GM10248 (cell line): ENCODE measurements at regions of chr5 and their contacts with region 1.

Region 1: DNA sequence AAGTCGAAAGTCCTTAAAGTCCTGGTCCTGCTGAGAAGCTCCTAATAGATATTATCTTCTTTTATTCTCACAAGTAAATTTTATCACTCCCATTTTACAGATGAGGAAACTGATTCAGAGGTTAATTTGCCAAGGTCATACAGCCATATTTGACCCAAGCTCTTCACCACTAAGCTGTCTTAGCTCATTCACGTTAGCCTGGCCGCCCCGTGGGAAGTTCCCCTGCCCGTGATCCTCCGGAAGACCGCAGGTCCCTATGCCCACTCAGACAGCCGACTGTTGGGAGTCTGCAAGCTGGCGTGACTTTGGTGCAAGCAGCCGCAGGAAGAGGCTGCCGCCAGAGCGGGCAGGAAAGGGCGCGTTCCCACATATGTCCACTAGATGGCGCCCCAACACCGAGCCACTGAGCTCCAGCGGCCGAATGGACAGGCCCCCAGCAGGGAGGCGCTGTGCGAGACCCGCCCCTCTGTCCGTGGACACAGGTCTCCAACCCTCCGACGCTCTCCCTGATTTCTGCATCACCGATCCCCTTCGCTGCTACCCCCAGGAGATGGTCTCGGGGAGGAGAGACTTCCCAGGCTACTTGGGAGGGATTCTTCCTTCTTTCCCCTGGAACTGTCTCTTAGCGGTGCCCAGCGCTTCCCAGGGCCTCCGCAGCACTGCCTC is 10.0 kb upstream of the ARAP3 start:
- DNase-seq: peak; percentile 88
- CTCF ChIP-seq: peak; percentile 98

Region 2: GRCh38 chr5:141547488-141547887 is 144.5 kb before region 1 on chr5:
- CTCF ChIA-PET with region 1: no interaction called
- POLR2A ChIA-PET with region 1: no interaction called
- DNase-seq: no peak
- CTCF ChIP-seq: no peak

Region 3: GRCh38 chr5:141570655-141571054 is 121.3 kb before region 1 on chr5:
- CTCF ChIA-PET with region 1: no interaction called
- POLR2A ChIA-PET with region 1: no interaction called
- DNase-seq: no peak
- CTCF ChIP-seq: no peak

Region 4: DNA sequence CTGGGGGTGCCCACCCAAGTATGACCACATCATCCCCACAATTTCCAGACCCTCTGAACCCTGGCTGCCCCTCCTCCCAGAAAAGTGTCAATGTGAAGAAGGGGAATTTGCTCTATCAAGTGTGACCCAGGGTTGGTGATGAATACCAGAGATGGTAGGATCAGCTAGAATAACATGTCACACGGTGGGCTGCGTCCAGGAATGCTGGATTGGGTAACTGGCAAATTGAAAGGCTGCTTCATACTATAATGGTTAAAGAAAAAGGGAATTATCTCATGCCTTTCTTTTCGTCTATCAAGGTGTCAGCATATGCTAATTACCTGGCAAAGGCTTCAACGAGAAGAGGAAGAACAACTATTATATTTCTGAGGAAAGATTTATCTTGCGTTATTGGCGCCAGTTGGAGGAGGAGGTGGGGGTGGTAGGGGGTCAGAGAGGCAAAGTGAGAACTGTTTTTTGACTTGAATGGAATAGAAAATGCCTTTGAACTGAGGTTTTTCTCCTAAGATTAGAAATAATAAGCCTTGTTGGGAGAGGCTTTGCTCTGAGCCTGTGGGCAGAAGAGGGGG is 17.8 kb after region 1 on chr5:
- CTCF ChIA-PET with region 1: interaction called, 73 read pairs
- POLR2A ChIA-PET with region 1: no interaction called
- DNase-seq: no peak
- CTCF ChIP-seq: no peak

Region 5: DNA sequence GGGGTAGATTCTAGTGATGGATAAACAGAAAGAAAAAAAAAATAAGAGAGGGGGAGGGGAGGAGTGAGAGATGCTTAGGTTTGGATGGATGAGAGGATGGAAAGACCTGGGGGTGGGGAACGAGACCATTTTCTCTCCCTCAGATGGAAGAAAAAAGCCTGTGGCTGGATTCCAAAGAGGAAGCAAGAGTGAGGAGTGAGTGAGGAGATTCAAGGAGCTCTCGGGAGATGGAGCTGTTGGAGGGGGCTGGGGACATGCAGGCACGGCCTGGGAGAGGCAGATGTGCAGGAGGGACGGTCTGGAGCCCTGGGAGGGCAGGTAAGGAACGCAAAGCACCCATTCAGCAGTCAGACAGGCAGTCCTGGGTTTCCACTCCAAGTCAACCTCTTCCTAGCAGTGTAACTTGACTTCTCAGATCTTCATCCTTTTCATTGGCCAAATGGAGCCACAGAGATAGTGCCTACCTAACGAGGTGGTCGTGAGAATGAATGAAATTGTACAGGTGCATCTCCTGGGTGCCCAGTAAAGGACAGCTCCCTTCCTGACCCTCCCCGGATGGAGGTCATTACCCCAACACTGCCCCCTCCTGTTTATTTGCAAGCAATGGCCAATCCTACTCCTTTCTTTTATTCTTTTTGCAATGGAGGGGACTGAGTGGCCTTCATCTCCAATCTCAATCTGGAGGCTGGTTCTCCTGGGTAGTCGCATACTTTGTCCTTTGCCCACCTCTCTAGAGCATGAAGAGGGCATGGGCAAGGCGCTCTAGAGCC is 134.0 kb after region 1 on chr5:
- CTCF ChIA-PET with region 1: interaction called, 35 read pairs
- POLR2A ChIA-PET with region 1: no interaction called
- DNase-seq: peak; percentile 60
- CTCF ChIP-seq: peak; percentile 29

Region 6: GRCh38 chr5:141914199-141914743 is 222.3 kb after region 1 on chr5:
- CTCF ChIA-PET with region 1: interaction called, 12 read pairs
- POLR2A ChIA-PET with region 1: no interaction called
- DNase-seq: peak; percentile 66
- CTCF ChIP-seq: peak; percentile 29

Region 7: DNA sequence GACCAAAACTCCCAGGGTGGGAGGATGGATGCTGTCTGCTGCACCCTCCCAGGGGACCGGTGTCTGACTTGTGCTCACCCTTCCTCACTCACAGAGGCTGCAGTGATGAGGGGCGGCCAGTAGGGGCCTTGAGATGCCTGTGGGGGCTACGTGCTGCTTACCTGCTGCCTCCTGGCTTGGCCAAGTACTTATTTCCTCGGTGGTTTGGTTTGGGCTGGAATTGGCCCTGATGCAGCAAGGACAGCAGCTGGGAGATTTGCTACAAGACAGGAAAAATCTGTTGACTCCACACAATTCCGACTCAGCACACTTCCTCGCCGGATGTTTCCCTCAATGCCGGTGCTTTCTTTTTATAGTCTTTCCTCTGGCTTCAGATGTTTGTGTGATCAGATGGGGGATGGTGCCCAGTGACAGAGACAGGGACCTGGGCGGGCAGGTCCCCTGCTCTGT is 259.4 kb after region 1 on chr5:
- CTCF ChIA-PET with region 1: interaction called, 119 read pairs
- POLR2A ChIA-PET with region 1: no interaction called
- DNase-seq: peak; percentile 62
- CTCF ChIP-seq: peak; percentile 4

Region 8: GRCh38 chr5:142145106-142145900 is 453.3 kb after region 1 on chr5:
- CTCF ChIA-PET with region 1: interaction called, 41 read pairs
- POLR2A ChIA-PET with region 1: no interaction called
- DNase-seq: peak; percentile 50
- CTCF ChIP-seq: peak; percentile 79